B cell (primary cell): ENCODE measurements at regions of chr2 and their contacts with region 1.

Region 1: GRCh38 chr2:85813982-85814801 is 60.4 kb downstream of the ATOH8 start:
- DNase-seq: peak; percentile 82
- ATAC-seq: peak; percentile 89
- H3K4me3 ChIP-seq: no peak overlapping the region
- H3K4me3 Mint-ChIP-seq: no peak overlapping the region
- H3K27ac ChIP-seq: no peak overlapping the region
- H3K27ac Mint-ChIP-seq: no peak overlapping the region
- H3K4me1 ChIP-seq: no peaks in the 10 kb centered on the region
- H3K4me1 Mint-ChIP-seq: no peaks in the 10 kb centered on the region
- H3K27me3 ChIP-seq: peaks cover 0 to 9% (median 1%) of the 10 kb centered on the region in 4 experiments
- H3K27me3 Mint-ChIP-seq: peaks cover 20% of the 10 kb centered on the region
- CTCF ChIP-seq: peak; percentile 92

Region 2: GRCh38 chr2:85642725-85643124 is 171.5 kb before region 1 on chr2:
- CTCF ChIA-PET with region 1: interaction called, 19 read pairs
- POLR2A ChIA-PET with region 1: no interaction called
- intact Hi-C with region 1: loop called (anchors 1 kb)
- DNase-seq: no peak
- ATAC-seq: no peak
- H3K4me3 ChIP-seq: no peak overlapping the region
- H3K4me3 Mint-ChIP-seq: no peak overlapping the region
- H3K27ac ChIP-seq: no peak overlapping the region
- H3K27ac Mint-ChIP-seq: no peak overlapping the region
- H3K4me1 ChIP-seq: peaks cover 6 to 9% of the 10 kb centered on the region in 2 donors
- H3K4me1 Mint-ChIP-seq: peaks cover 5% of the 10 kb centered on the region
- H3K27me3 ChIP-seq: no peaks in the 10 kb centered on the region
- H3K27me3 Mint-ChIP-seq: no peaks in the 10 kb centered on the region
- CTCF ChIP-seq: no peak

Region 3: DNA sequence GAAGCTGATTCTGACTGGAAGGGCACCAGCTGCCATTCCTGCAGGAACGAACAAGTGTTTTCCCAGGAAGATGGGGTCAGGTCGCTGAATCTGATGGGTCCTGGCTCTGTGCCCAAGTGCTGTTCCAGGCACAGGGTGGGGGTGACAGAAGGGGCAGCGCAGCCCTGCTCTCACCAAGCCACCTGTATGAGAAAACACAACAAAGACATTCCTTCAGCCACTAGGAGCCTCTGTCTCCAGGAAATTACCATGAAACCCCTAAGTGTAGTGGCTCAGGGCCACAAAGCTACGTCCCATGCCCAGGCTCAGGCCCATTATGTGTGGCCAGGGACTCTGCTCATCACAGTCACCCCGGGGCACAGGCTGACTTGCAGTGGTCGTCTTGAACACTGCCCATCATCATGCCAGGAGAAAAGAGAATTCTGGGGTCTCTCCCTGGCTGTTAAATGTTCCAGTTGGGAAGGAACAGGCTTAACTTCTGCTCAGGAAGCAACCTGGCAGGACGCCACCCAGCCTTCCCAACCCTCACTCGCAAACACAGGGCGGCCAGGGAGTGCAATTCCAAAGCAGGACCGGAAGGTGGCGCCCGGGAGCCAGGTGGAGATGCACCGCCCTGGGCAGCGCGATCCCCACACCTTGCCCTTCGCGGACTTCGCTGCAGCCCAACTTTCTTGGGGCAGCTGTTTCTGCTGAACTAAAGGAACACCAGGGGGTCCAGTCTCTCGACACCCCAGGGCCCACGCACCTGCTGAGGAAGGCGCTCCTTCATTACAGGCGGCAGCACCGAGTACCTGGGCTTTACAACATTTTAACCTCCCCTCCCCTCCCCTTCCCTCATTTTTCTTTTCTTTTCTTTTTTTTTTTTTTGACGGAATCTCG is 135.2 kb before region 1 on chr2:
- CTCF ChIA-PET with region 1: interaction called, 19 read pairs
- POLR2A ChIA-PET with region 1: no interaction called
- intact Hi-C with region 1: loop called (anchors 2 kb)
- DNase-seq: peak; percentile 82
- ATAC-seq: peak; percentile 99
- H3K4me3 ChIP-seq: no peak overlapping the region
- H3K4me3 Mint-ChIP-seq: peak overlapping the region; percentile 18
- H3K27ac ChIP-seq: no peak overlapping the region
- H3K27ac Mint-ChIP-seq: no peak overlapping the region
- H3K4me1 ChIP-seq: peaks cover 0 to 7% of the 10 kb centered on the region in 2 donors
- H3K4me1 Mint-ChIP-seq: peaks cover 7% of the 10 kb centered on the region
- H3K27me3 ChIP-seq: peaks cover 0 to 17% (median 6%) of the 10 kb centered on the region in 4 experiments
- H3K27me3 Mint-ChIP-seq: peaks cover 24% of the 10 kb centered on the region
- CTCF ChIP-seq: peak; percentile 99

Region 4: DNA sequence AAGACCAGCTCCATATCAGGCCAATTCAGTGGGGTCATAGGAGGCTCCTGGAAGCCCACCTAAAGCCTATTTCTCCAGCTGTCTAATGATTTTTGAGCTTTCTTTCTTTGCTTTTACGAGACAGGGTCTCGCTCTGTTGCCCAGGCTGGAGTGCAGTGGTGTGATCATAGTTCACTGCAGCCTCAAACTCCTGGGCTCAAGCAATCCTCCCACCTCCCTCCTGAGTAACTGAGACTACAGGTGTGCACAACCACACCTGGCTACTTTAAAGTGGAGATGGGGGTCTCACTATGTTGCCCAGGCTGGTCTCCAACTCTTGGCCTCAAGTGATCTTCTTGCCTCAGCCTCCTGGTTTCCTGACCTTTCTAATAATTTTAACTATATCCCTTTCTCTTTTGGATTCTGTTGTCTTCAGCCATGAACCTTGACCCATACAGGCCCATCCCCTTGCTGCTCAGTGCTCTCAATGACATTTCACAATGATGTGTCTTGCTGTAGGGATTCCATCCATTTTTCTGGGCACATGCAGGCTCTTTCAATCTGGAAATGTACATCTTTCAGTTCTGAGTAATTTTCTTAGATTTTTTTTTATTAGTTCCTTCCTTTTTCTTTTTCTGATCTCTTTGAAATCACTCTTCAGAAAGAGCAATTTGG is 90.4 kb before region 1 on chr2:
- CTCF ChIA-PET with region 1: interaction called, 119 read pairs
- POLR2A ChIA-PET with region 1: no interaction called
- intact Hi-C with region 1: no loop called
- DNase-seq: no peak
- ATAC-seq: no peak
- H3K4me3 ChIP-seq: no peak overlapping the region
- H3K4me3 Mint-ChIP-seq: no peak overlapping the region
- H3K27ac ChIP-seq: no peak overlapping the region
- H3K27ac Mint-ChIP-seq: no peak overlapping the region
- H3K4me1 ChIP-seq: peaks cover 2% of the 10 kb centered on the region in 2 donors
- H3K4me1 Mint-ChIP-seq: no peaks in the 10 kb centered on the region
- H3K27me3 ChIP-seq: peaks cover 0 to 8% (median 5%) of the 10 kb centered on the region in 4 experiments
- H3K27me3 Mint-ChIP-seq: peaks cover 23% of the 10 kb centered on the region
- CTCF ChIP-seq: no peak

Region 5: GRCh38 chr2:85728883-85729824 is 85.0 kb before region 1 on chr2:
- CTCF ChIA-PET with region 1: interaction called, 119 read pairs
- POLR2A ChIA-PET with region 1: interaction called, 3 read pairs
- intact Hi-C with region 1: no loop called
- DNase-seq: peak; percentile 80
- ATAC-seq: peak; percentile 88
- H3K4me3 ChIP-seq: no peak overlapping the region
- H3K4me3 Mint-ChIP-seq: no peak overlapping the region
- H3K27ac ChIP-seq: no peak overlapping the region
- H3K27ac Mint-ChIP-seq: no peak overlapping the region
- H3K4me1 ChIP-seq: peaks cover 3 to 7% of the 10 kb centered on the region in 2 donors
- H3K4me1 Mint-ChIP-seq: no peaks in the 10 kb centered on the region
- H3K27me3 ChIP-seq: peaks cover 0 to 10% (median 3%) of the 10 kb centered on the region in 4 experiments
- H3K27me3 Mint-ChIP-seq: peaks cover 23% of the 10 kb centered on the region
- CTCF ChIP-seq: peak; percentile 96

Region 6: GRCh38 chr2:85741833-85742455 is 72.2 kb before region 1 on chr2:
- CTCF ChIA-PET with region 1: interaction called, 35 read pairs
- POLR2A ChIA-PET with region 1: no interaction called
- intact Hi-C with region 1: no loop called
- DNase-seq: no peak
- ATAC-seq: no peak
- H3K4me3 ChIP-seq: no peak overlapping the region
- H3K4me3 Mint-ChIP-seq: no peak overlapping the region
- H3K27ac ChIP-seq: no peak overlapping the region
- H3K27ac Mint-ChIP-seq: no peak overlapping the region
- H3K4me1 ChIP-seq: peaks cover 15% of the 10 kb centered on the region in 2 donors
- H3K4me1 Mint-ChIP-seq: peaks cover 20% of the 10 kb centered on the region
- H3K27me3 ChIP-seq: peaks cover 0 to 16% (median 8%) of the 10 kb centered on the region in 4 experiments
- H3K27me3 Mint-ChIP-seq: peaks cover 51% of the 10 kb centered on the region
- CTCF ChIP-seq: no peak

Region 7: DNA sequence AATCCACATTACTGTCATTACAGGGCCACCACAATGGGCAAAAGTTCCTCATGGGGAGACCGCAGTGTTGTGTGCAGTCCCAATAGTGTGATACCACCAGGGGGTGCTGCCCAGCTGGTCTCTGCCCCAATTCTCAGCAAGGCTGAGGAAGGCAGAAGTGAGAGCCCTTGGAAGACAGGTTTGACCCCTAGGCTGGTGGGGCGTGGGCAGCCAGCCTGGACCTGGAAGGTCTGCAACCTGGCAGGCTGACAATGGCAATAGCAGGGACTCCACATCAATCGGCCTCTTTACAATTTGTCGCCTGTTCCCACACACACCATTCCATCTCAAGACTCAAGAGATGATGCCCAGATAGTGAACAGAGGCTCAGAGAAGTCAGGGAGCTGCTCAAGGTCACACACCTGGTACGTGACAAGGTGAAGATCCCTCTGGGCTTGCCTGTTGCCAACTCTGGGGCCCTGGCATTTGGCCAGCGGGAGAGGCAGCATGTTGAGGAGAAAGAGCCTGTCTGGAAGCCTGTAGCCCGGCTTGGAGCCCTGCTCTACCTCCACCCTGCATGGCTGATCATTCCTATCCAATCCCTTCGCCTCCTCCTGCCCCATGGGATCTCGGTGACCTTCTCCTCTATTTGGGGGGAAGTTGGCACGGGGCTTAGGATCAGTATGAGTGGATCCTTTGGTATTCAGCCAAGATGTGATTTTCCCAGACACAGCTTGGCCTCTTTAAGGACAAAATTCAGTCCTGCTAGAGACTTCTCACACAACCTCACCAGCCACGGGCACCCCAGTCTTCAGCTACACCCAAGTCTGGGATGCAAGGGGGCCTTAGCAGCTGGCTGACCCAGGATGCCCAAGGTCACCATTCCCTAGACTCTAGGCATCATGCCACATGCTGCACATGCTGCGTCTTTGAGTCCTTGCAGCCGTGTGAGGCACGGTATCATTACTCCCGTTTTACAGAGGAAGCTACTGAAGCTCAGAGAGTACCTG is 63.3 kb before region 1 on chr2:
- CTCF ChIA-PET with region 1: interaction called, 39 read pairs
- POLR2A ChIA-PET with region 1: no interaction called
- intact Hi-C with region 1: loop called (anchors 1 kb)
- DNase-seq: peak; percentile 67
- ATAC-seq: peak; percentile 29
- H3K4me3 ChIP-seq: no peak overlapping the region
- H3K4me3 Mint-ChIP-seq: peak overlapping the region; percentile 54
- H3K27ac ChIP-seq: no peak overlapping the region
- H3K27ac Mint-ChIP-seq: no peak overlapping the region
- H3K4me1 ChIP-seq: peaks cover 60 to 64% of the 10 kb centered on the region in 2 donors
- H3K4me1 Mint-ChIP-seq: peaks cover 59% of the 10 kb centered on the region
- H3K27me3 ChIP-seq: peaks cover 0 to 49% (median 21%) of the 10 kb centered on the region in 4 experiments
- H3K27me3 Mint-ChIP-seq: peaks cover 23% of the 10 kb centered on the region
- CTCF ChIP-seq: peak; percentile 70